ENCODE measurements at regions of chr13 and their contacts with region 1.

Region 1: DNA sequence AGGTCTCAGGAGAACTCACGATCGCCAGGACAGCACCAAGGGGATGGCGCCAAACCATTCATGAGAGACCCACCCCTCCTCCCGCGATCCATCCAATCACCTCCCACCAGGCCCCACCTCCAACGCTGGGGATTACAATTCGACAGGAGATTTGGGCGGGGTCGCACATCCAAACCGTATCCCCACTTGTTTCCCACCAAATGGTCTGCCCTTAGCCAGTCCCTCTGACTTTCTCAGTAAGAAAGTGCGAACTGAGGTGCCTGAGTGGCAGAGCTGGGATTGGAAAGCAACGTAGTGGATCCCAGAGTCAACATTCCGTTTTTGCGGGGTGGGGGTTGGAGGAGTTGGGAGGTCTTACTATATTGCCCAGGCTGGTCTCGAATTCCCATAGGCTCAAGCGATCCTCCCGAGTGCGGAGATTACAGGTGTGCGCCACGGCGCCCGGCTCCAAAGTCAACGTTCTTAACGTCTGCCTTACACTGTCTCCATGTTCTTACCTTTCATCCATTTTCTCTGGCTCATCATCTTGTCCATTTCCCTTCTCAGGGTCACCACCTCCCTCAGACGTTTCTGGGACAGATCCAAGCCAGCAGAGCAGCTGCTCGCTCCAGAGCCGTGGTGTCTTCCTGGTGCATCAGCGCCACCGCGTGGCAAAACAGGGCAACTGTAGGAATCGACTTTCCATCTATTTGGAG is 102.7 kb upstream of the ABCC4 start:
- DNase-seq: peak; percentile 85
- ATAC-seq: peak; percentile 83
- H3K4me3 ChIP-seq: peak overlapping the region; percentile 63
- H3K27ac ChIP-seq: no peak overlapping the region
- H3K4me1 ChIP-seq: no peaks in the 10 kb centered on the region
- H3K27me3 ChIP-seq: no peaks in the 10 kb centered on the region
- CTCF ChIP-seq: peak; percentile 90

Region 2: GRCh38 chr13:95191821-95192563 is 212.0 kb before region 1 on chr13:
- CTCF ChIA-PET with region 1: interaction called, 33 read pairs
- POLR2A ChIA-PET with region 1: no interaction called
- intact Hi-C with region 1: loop called (anchors 1 kb)
- DNase-seq: peak; percentile 73
- ATAC-seq: peak; percentile 99
- H3K4me3 ChIP-seq: no peak overlapping the region
- H3K27ac ChIP-seq: no peak overlapping the region
- H3K4me1 ChIP-seq: no peaks in the 10 kb centered on the region
- H3K27me3 ChIP-seq: no peaks in the 10 kb centered on the region
- CTCF ChIP-seq: peak; percentile 88

Region 3: GRCh38 chr13:95248953-95249352 is 155.0 kb before region 1 on chr13:
- CTCF ChIA-PET with region 1: no interaction called
- POLR2A ChIA-PET with region 1: no interaction called
- intact Hi-C with region 1: no loop called
- DNase-seq: no peak
- ATAC-seq: no peak
- H3K4me3 ChIP-seq: no peak overlapping the region
- H3K27ac ChIP-seq: no peak overlapping the region
- H3K4me1 ChIP-seq: peaks cover 22% of the 10 kb centered on the region
- H3K27me3 ChIP-seq: no peaks in the 10 kb centered on the region
- CTCF ChIP-seq: no peak

Region 4: DNA sequence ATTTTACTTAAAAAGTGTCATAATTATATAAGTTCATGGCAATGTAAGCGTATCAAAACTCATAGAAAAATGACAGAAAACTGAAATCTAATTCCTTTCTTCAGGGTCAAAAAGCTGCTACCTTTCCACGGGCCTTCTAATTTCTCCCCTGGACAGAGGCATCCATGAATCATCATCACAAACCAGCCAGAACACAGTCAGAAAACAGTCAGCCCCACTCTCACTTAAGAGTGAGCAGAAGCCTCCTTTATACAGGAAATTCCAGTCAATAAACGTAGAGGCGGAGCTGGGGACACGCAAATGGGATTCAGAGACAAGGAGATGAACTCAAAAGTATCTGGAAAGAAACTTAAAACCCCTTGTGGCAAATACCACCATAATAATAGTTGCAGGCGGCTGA is 48.5 kb before region 1 on chr13:
- CTCF ChIA-PET with region 1: no interaction called
- POLR2A ChIA-PET with region 1: no interaction called
- intact Hi-C with region 1: no loop called
- DNase-seq: peak; percentile 49
- ATAC-seq: no peak; the same call in 1 of the 2 replicates
- H3K4me3 ChIP-seq: no peak overlapping the region
- H3K27ac ChIP-seq: no peak overlapping the region
- H3K4me1 ChIP-seq: 0 out of 2 replicates have a peak, but pooled peaks cover under 1% of the 10 kb centered on the region
- H3K27me3 ChIP-seq: no peaks in the 10 kb centered on the region
- CTCF ChIP-seq: no peak

Region 5: DNA sequence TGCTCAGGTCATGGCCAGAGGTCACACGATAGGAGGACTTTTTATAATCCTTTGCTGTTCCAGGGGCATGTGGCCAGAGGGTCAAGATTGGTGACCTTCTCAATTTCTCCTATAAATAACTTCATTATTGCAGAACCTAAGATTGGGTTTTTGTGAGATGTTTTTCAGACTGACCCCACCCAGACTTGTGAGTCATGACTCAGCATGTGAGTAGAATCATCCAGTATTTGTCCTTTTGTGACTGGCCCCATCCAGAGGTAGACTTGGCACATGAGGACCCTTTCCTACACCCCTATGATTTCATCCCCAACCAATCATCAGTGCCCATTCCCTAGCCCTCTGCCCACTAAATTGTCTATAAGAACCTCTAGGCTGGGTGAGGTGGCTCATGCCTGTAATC is 18.2 kb before region 1 on chr13:
- CTCF ChIA-PET with region 1: interaction called, 11 read pairs
- POLR2A ChIA-PET with region 1: no interaction called
- intact Hi-C with region 1: no loop called
- DNase-seq: no peak
- ATAC-seq: no peak
- H3K4me3 ChIP-seq: no peak overlapping the region
- H3K27ac ChIP-seq: no peak overlapping the region
- H3K4me1 ChIP-seq: no peaks in the 10 kb centered on the region
- H3K27me3 ChIP-seq: no peaks in the 10 kb centered on the region
- CTCF ChIP-seq: no peak

Region 6: DNA sequence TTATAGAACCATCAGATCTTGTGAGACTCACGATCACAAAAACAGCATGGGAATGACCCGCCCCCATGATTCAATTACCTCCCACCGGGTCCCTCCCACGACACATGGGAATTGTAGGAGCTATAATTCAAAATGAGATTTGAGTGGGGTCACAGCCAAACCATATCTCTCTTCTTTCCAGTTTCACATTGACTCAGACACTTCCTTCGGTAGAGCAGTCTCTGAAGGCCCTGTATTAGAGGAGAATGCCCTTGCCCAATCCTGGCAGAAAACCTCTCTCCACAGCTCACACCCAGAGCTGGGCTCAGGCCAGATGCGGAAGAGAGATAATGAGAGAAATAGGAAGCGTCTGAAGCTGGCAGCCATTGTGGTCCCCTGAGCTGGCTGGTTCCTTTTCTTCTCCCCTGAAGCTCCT is 76.2 kb after region 1 on chr13:
- CTCF ChIA-PET with region 1: no interaction called
- POLR2A ChIA-PET with region 1: no interaction called
- intact Hi-C with region 1: loop called (anchors 1 kb)
- DNase-seq: no peak
- ATAC-seq: no peak
- H3K4me3 ChIP-seq: no peak overlapping the region
- H3K27ac ChIP-seq: no peak overlapping the region
- H3K4me1 ChIP-seq: peaks cover 16% of the 10 kb centered on the region
- H3K27me3 ChIP-seq: no peaks in the 10 kb centered on the region
- CTCF ChIP-seq: no peak